ENCODE measurements at regions of chr17 and their contacts with region 1.

Region 1: GRCh38 chr17:29042679-29043538 is at the start of gene PIPOX:
- DNase-seq: peak; percentile 94
- H3K4me3 ChIP-seq: peak within 1 kb of the TSS; percentile 7
- H3K27ac ChIP-seq: peak within 1 kb of the TSS; percentile 70
- H3K4me1 ChIP-seq: peaks cover 61% of the 10 kb centered on the region
- H3K27me3 ChIP-seq: no peaks in the 10 kb centered on the region
- CTCF ChIP-seq: peak; percentile 65
- total RNA-seq, gene PIPOX: 7.8 and 8.8 TPM in 2 replicates

Region 2: GRCh38 chr17:28982131-28982951 is 60.6 kb before region 1 on chr17:
- CTCF ChIA-PET with region 1: no interaction called
- POLR2A ChIA-PET with region 1: no interaction called
- intact Hi-C with region 1: loop called (anchors 5 kb)
- DNase-seq: peak; percentile 98
- H3K4me3 ChIP-seq: no peak overlapping the region
- H3K27ac ChIP-seq: peak overlapping the region; percentile 96
- H3K4me1 ChIP-seq: peaks cover 66% of the 10 kb centered on the region
- H3K27me3 ChIP-seq: no peaks in the 10 kb centered on the region
- CTCF ChIP-seq: no peak

Region 3: DNA sequence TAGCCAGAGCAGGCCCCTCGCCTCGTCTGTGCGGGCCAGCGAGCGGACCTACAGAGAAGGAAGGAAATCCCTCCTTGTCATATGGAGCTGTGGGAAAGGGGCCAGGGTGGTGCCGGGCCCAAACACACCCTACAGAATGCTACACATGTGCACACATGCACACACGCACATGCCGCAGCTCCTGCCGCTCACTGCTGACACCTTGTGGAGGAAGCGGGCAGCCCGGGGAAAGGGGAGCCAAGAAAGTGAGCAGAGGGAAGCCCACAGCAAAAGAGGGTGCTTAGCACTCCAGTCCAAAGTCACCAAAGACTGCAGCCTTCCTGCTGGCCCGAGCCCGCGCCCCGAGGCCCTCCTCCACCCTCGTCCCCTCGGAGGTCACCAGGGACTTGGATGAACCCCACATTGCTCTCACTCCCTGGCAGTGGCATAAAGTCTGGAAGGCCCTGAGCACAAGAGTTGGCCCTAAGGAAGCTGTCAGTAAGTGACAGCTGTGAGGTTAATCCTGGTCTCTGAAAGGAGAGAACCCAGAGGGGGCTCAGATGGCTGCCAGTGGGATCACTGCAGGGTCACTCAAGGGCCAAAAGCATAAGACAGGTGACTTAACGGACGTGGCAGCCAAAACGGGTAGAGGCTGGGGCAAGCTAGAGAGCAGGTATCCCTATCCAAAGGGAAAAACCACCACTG is 69.0 kb after region 1 on chr17:
- CTCF ChIA-PET with region 1: interaction called, 4 read pairs
- POLR2A ChIA-PET with region 1: interaction called, 3 read pairs
- intact Hi-C with region 1: loop called (anchors 5 kb)
- DNase-seq: peak; percentile 92
- H3K4me3 ChIP-seq: no peak overlapping the region
- H3K27ac ChIP-seq: peak overlapping the region; percentile 32
- H3K4me1 ChIP-seq: peaks cover 35% of the 10 kb centered on the region
- H3K27me3 ChIP-seq: no peaks in the 10 kb centered on the region
- CTCF ChIP-seq: peak; percentile 99

Region 4: GRCh38 chr17:29123083-29123482 is 80.2 kb after region 1 on chr17:
- CTCF ChIA-PET with region 1: no interaction called
- POLR2A ChIA-PET with region 1: no interaction called
- intact Hi-C with region 1: no loop called
- DNase-seq: no peak
- H3K4me3 ChIP-seq: no peak overlapping the region
- H3K27ac ChIP-seq: no peak overlapping the region
- H3K4me1 ChIP-seq: no peaks in the 10 kb centered on the region
- H3K27me3 ChIP-seq: no peaks in the 10 kb centered on the region
- CTCF ChIP-seq: no peak

Measured in A673 (cell line).